Activated B cell treated with CpG ODN at 0.5 μM for 24 hours (primary cell): ENCODE measurements at regions of chr4 and their contacts with region 1.

Region 1: GRCh38 chr4:170198747-170199146 is 109.0 kb upstream of the AADAT start:
- DNase-seq: no peak
- ATAC-seq: no peak
- H3K4me3 Mint-ChIP-seq: no peak overlapping the region
- H3K27ac Mint-ChIP-seq: no peak overlapping the region
- H3K4me1 Mint-ChIP-seq: peaks cover 12% of the 10 kb centered on the region
- H3K27me3 Mint-ChIP-seq: peaks cover 1% of the 10 kb centered on the region
- CTCF ChIP-seq: no peak

Region 2: DNA sequence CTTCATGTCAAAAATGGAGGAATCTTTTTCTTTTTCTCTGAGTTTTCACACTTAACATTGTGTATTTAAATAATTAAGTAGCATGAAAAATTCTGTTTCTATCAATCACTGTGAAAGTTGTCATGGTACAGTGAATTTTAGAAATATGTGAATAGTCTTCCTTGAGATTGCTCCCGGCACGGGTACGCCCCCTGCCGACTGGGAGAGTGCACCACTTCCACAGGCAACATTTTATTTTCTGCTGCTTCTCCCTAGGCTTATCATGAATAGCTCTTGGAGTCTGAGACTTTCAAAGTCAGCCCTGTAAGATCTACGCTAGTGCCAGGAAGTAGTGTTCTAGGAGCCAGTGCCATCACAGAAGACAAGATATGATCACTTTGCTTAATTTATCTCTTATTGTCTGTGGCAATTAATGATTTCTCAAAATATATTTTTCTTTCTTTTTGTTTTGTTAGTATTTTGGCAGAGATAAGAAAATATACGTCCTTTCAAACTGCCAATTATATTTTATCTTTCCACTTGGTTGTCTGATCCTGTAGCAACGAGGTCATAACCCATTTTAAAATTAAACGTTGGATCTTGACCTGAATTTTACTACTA is 654.8 kb after region 1 on chr4:
- CTCF ChIA-PET with region 1: no interaction called
- POLR2A ChIA-PET with region 1: no interaction called
- intact Hi-C with region 1: loop called (anchors 5 kb)
- DNase-seq: no peak
- ATAC-seq: no peak
- H3K4me3 Mint-ChIP-seq: no peak overlapping the region
- H3K27ac Mint-ChIP-seq: no peak overlapping the region
- H3K4me1 Mint-ChIP-seq: no peaks in the 10 kb centered on the region
- H3K27me3 Mint-ChIP-seq: no peaks in the 10 kb centered on the region
- CTCF ChIP-seq: peak; percentile 30